HCT116 (cell line): ENCODE measurements at regions of chr17 and their contacts with region 1.

Region 1: GRCh38 chr17:64565563-64565962 is 58.8 kb downstream of the CEP95 start:
- DNase-seq: no peak
- ATAC-seq: no peak
- H3K4me3 ChIP-seq: no peak overlapping the region
- H3K27ac ChIP-seq: no peak overlapping the region
- H3K4me1 ChIP-seq: no peaks in the 10 kb centered on the region
- H3K27me3 ChIP-seq: no peaks in the 10 kb centered on the region
- CTCF ChIP-seq: no peak
- POLR2A ChIP-seq: no peak
- RAD21 ChIP-seq: no peak

Region 2: DNA sequence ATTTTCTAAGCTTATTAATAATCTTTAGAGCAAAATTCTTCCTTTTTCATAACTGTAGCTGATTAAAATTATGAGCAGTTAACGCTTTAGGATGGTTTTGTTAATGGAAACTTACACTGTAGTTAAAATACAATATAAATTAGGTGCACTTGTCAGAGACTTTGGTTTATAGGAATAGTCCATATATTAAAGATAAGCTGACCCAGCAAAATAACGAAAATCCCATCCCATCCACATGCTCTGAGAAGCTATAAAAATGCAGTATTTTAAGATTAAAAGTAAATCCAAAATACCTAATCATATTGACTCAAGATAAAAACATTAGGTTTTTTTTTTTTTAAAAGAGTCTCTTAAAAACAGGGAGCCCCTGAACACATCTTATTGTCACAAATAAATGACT is 20.8 kb before region 1 on chr17:
- CTCF ChIA-PET with region 1: interaction called, 3 read pairs
- POLR2A ChIA-PET with region 1: no interaction called
- RAD21 ChIA-PET with region 1: no interaction called
- intact Hi-C with region 1: loop called (anchors 2 kb)
- DNase-seq: no peak
- ATAC-seq: no peak
- H3K4me3 ChIP-seq: no peak overlapping the region
- H3K27ac ChIP-seq: no peak overlapping the region
- H3K4me1 ChIP-seq: no peaks in the 10 kb centered on the region
- H3K27me3 ChIP-seq: no peaks in the 10 kb centered on the region
- CTCF ChIP-seq: no peak
- POLR2A ChIP-seq: no peak
- RAD21 ChIP-seq: no peak